Caco-2 (cell line): ENCODE measurements at regions of chr2 and their contacts with region 1.

Region 1: GRCh38 chr2:104412384-104412783 is 441.5 kb upstream of the POU3F3 start:
- DNase-seq: peak in 1 of 2 experiments; percentile 44
- H3K4me3 ChIP-seq: no peak overlapping the region
- H3K4me3 Mint-ChIP-seq: no peak overlapping the region
- H3K27ac Mint-ChIP-seq: no peak overlapping the region
- H3K4me1 ChIP-seq: no peaks in the 10 kb centered on the region
- H3K4me1 Mint-ChIP-seq: no peaks in the 10 kb centered on the region
- H3K27me3 ChIP-seq: no peaks in the 10 kb centered on the region
- H3K27me3 Mint-ChIP-seq: peaks cover 23% of the 10 kb centered on the region
- CTCF ChIP-seq: peak; percentile 42 to 52

Region 2: GRCh38 chr2:103959174-103960128 is 452.9 kb before region 1 on chr2:
- CTCF ChIA-PET with region 1: no interaction called
- POLR2A ChIA-PET with region 1: no interaction called
- intact Hi-C with region 1: loop called (anchors 2 kb)
- DNase-seq: peak; percentile 50 to 59
- H3K4me3 ChIP-seq: no peak overlapping the region
- H3K4me3 Mint-ChIP-seq: no peak overlapping the region
- H3K27ac Mint-ChIP-seq: no peak overlapping the region
- H3K4me1 ChIP-seq: no peaks in the 10 kb centered on the region
- H3K4me1 Mint-ChIP-seq: no peaks in the 10 kb centered on the region
- H3K27me3 ChIP-seq: no peaks in the 10 kb centered on the region
- H3K27me3 Mint-ChIP-seq: peaks cover 11% of the 10 kb centered on the region
- CTCF ChIP-seq: peak; percentile 71 to 87

Region 3: GRCh38 chr2:104033399-104033798 is 379.0 kb before region 1 on chr2:
- CTCF ChIA-PET with region 1: no interaction called
- POLR2A ChIA-PET with region 1: no interaction called
- intact Hi-C with region 1: loop called (anchors 1 kb)
- DNase-seq: peak in 1 of 2 experiments; percentile 22
- H3K4me3 ChIP-seq: no peak overlapping the region
- H3K4me3 Mint-ChIP-seq: no peak overlapping the region
- H3K27ac Mint-ChIP-seq: no peak overlapping the region
- H3K4me1 ChIP-seq: no peaks in the 10 kb centered on the region
- H3K4me1 Mint-ChIP-seq: no peaks in the 10 kb centered on the region
- H3K27me3 ChIP-seq: no peaks in the 10 kb centered on the region
- H3K27me3 Mint-ChIP-seq: peaks cover 5% of the 10 kb centered on the region
- CTCF ChIP-seq: peak; percentile 24 to 47

Region 4: DNA sequence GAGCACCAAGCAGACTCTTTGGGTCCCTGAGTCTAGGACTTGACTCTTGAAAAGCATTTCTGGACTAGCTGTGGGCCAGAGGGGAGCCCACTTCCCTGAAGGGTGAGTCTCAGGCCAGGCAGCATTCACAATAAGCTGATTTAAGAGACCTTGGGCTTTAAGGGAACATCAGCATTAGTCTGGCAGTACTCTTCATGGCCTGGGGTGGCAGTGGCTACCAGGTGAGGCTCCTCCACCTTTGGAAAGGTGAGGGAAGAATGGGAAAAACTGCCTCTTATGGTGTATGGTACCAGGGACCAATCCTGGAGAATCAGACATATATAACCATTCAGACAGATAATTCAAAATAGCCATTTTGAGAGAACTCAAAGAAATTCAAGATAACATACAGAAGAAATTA is 158.4 kb before region 1 on chr2:
- CTCF ChIA-PET with region 1: no interaction called
- POLR2A ChIA-PET with region 1: no interaction called
- intact Hi-C with region 1: loop called (anchors 1 kb)
- DNase-seq: peak in 1 of 2 experiments; percentile 23
- H3K4me3 ChIP-seq: no peak overlapping the region
- H3K4me3 Mint-ChIP-seq: no peak overlapping the region
- H3K27ac Mint-ChIP-seq: no peak overlapping the region
- H3K4me1 ChIP-seq: no peaks in the 10 kb centered on the region
- H3K4me1 Mint-ChIP-seq: no peaks in the 10 kb centered on the region
- H3K27me3 ChIP-seq: no peaks in the 10 kb centered on the region
- H3K27me3 Mint-ChIP-seq: no peaks in the 10 kb centered on the region
- CTCF ChIP-seq: peak; percentile 23 to 32

Region 5: DNA sequence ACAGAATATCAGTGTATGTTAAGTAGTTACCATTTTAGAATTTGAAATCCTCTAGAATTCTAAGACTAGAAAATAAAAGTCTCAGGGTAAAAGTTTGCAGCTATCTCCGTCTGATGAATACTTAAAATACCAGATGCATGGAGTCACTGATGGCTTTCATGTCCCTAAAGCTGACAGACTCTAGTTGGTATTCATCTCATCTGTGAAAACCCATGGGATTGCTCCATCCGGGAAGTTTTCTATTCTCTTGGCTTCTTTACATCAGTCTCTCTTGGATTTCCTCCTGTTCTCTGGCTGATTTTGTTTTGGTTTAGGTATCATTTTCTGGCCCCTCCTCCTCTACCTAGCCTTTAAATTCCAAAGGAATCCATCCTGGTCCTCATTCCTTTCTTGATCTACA is 24.1 kb before region 1 on chr2:
- CTCF ChIA-PET with region 1: no interaction called
- POLR2A ChIA-PET with region 1: no interaction called
- intact Hi-C with region 1: no loop called
- DNase-seq: no peak
- H3K4me3 ChIP-seq: no peak overlapping the region
- H3K4me3 Mint-ChIP-seq: no peak overlapping the region
- H3K27ac Mint-ChIP-seq: no peak overlapping the region
- H3K4me1 ChIP-seq: no peaks in the 10 kb centered on the region
- H3K4me1 Mint-ChIP-seq: no peaks in the 10 kb centered on the region
- H3K27me3 ChIP-seq: no peaks in the 10 kb centered on the region; the same call in none of the 2 replicates
- H3K27me3 Mint-ChIP-seq: peaks cover 19% of the 10 kb centered on the region
- CTCF ChIP-seq: no peak

Region 6: GRCh38 chr2:104849618-104850141 is 437.3 kb after region 1 on chr2:
- CTCF ChIA-PET with region 1: no interaction called
- POLR2A ChIA-PET with region 1: no interaction called
- intact Hi-C with region 1: no loop called
- DNase-seq: peak in 1 of 2 experiments; percentile 66
- H3K4me3 ChIP-seq: no peak overlapping the region
- H3K4me3 Mint-ChIP-seq: no peak overlapping the region
- H3K27ac Mint-ChIP-seq: no peak overlapping the region
- H3K4me1 ChIP-seq: peaks cover 7% of the 10 kb centered on the region
- H3K4me1 Mint-ChIP-seq: peaks cover 15% of the 10 kb centered on the region
- H3K27me3 ChIP-seq: peaks cover 6% of the 10 kb centered on the region
- H3K27me3 Mint-ChIP-seq: peaks cover 73% of the 10 kb centered on the region
- CTCF ChIP-seq: peak; percentile 73 to 75

Region 7: DNA sequence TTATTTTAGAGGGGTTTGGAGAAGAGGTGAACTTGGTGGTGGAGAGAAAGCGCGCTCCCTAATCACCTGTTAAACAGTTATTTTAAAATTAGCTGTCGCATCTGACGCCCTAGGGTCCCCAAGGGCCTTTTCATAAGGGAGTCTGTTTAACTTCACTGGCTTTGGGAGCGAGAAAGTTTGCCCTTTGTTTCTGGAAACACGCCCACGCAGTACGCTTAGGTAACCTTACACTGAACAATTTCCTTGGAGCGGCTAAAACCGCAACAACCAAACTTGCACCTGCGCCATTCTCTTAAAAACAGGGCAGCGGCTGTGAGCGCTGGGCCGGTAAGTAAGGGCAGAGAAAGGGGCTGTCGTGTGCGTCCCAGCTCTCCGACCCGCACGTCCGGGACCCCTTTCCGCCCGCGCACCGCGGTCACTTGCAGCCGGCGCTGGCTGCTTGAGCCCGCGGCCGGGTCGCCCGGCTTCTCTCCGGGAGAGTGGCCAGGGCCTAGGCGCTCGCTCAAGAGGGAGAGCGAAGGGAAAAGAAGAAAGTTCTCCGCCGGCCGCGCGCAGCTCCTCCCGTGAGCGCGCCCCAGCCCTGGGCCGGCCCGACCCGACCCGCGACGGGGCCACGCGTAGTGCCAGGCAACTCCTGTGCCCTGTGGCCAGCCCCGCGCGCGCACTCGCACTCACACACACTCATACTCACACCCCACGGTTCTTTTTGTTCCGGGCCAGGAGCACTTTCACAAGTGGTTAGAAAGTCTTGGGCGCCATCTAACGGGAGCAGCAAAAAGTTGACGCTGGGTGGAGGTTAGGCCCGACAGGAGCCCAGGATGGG is 460.7 kb after region 1 on chr2:
- CTCF ChIA-PET with region 1: no interaction called
- POLR2A ChIA-PET with region 1: no interaction called
- intact Hi-C with region 1: loop called (anchors 10 kb)
- DNase-seq: peak; percentile 67 to 70
- H3K4me3 ChIP-seq: peak overlapping the region; percentile 37
- H3K4me3 Mint-ChIP-seq: peak overlapping the region; percentile 54
- H3K27ac Mint-ChIP-seq: no peak overlapping the region
- H3K4me1 ChIP-seq: peaks cover 4% of the 10 kb centered on the region
- H3K4me1 Mint-ChIP-seq: no peaks in the 10 kb centered on the region
- H3K27me3 ChIP-seq: peaks cover 3% of the 10 kb centered on the region
- H3K27me3 Mint-ChIP-seq: peaks cover 20% of the 10 kb centered on the region
- CTCF ChIP-seq: peak; percentile 59 to 65